CD8-positive, alpha-beta memory T cell (primary cell): ENCODE measurements at regions of chr16 and their contacts with region 1.

Region 1: GRCh38 chr16:50326949-50327402 is 41.8 kb downstream of the BRD7 start:
- DNase-seq: peak; percentile 53 to 85 (median 78)
- H3K4me3 ChIP-seq: no peak overlapping the region
- H3K4me3 Mint-ChIP-seq: peak overlapping the region in 3 of 7 donors; percentile 25 to 53 (median 26)
- H3K27ac ChIP-seq: no peak overlapping the region
- H3K27ac Mint-ChIP-seq: peak overlapping the region; percentile 62 to 96 (median 90)
- H3K4me1 ChIP-seq: peaks cover 25% of the 10 kb centered on the region
- H3K4me1 Mint-ChIP-seq: peaks cover 29 to 71% (median 38%) of the 10 kb centered on the region in 3 donors
- H3K27me3 ChIP-seq: no peaks in the 10 kb centered on the region
- H3K27me3 Mint-ChIP-seq: no peaks in the 10 kb centered on the region

Region 2: DNA sequence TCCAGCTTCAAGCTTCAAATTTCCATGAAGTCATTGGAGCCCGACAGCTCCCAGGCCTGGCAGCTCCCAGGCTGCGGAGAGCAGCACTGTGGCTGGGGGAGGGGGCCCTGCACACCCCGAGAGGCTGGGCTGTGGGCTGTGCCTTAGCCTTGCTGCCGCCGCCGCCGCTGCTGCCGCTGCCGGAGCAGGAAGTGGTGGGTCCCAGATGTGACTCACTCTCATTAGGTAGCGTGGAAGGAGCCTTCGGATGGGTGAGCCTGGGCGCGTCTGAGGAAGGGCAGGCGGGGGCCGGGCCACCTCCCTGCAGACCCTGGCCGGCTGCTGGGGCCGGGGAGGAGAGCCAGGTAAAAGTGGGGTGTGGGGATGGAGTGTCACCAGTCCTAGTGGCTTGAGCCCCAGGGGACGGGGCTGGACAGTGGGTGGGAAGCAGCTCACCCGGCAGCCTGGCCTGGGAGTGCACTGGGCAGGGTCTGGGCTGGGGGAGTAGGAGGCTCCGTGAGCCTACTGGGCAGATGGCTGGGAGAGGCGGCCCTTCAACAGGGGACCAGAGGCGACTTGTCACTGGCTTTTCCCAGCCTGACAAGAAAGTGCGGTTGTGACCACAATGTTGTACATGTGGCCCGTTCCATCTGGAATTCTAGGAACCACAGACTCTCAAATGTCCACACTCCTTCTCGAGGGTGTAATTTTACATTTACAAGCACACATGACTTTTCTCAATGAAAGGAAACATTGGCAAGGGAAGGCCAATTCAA is 60.5 kb before region 1 on chr16 and contains the start of gene ADCY7:
- CTCF ChIA-PET with region 1: interaction called, 40 read pairs
- POLR2A ChIA-PET with region 1: interaction called, 4 read pairs
- DNase-seq: peak; percentile 75 to 90 (median 80)
- H3K4me3 ChIP-seq: peak within 1 kb of the TSS; percentile 98
- H3K4me3 Mint-ChIP-seq: peak within 1 kb of the TSS; percentile 94 to 99 (median 97)
- H3K27ac ChIP-seq: peak within 1 kb of the TSS; percentile 89
- H3K27ac Mint-ChIP-seq: peak within 1 kb of the TSS; percentile 96 to 99 (median 98)
- H3K4me1 ChIP-seq: peaks cover 49% of the 10 kb centered on the region
- H3K4me1 Mint-ChIP-seq: peaks cover 60 to 81% (median 75%) of the 10 kb centered on the region in 3 donors
- H3K27me3 ChIP-seq: no peaks in the 10 kb centered on the region
- H3K27me3 Mint-ChIP-seq: peaks cover 0 to 1% of the 10 kb centered on the region in 2 donors
- total RNA-seq, gene ADCY7: 76.6 to 83.4 TPM

Region 3: DNA sequence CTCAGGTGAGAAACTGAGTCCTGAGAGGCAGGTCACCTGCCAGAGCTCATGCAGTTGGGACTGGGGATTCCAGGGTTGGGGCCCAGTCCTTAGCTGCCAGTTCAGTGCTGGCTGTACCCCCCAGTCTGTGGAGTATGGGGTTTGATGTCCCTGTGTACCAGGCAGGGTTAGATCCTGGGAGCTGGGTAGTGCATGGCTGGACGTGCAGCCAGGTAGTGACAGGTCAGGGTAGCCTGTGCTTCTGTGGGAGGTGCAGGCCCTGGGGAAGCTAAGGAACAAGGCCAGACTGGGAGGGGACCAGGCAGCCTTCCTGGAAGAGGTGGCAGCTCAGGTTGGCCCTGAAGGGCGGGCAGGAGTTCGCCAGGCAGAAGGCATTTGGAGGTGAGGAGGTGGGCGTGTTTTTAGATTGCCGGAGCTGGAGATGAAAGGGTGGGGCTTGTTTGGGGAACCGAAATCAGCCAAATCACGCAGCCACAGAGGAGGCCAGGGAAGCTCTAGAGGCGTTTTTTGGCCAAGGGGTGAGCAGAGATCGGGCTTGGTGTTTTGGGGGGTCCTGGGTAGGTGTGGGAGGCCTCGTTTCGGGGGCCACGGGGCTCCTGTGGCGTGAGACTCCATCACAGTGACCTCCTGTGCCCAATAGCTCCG is 53.2 kb before region 1 on chr16:
- CTCF ChIA-PET with region 1: interaction called, 40 read pairs
- POLR2A ChIA-PET with region 1: interaction called, 4 read pairs
- DNase-seq: peak in 2 of 5 donors; percentile 40 to 57
- H3K4me3 ChIP-seq: peak overlapping the region; percentile 67
- H3K4me3 Mint-ChIP-seq: peak overlapping the region; percentile 85 to 97 (median 90)
- H3K27ac ChIP-seq: peak overlapping the region; percentile 66
- H3K27ac Mint-ChIP-seq: peak overlapping the region; percentile 94 to 99 (median 98)
- H3K4me1 ChIP-seq: peaks cover 98% of the 10 kb centered on the region
- H3K4me1 Mint-ChIP-seq: peaks cover 93 to 100% (median 93%) of the 10 kb centered on the region in 3 donors
- H3K27me3 ChIP-seq: no peaks in the 10 kb centered on the region
- H3K27me3 Mint-ChIP-seq: no peaks in the 10 kb centered on the region

Region 4: GRCh38 chr16:50313596-50314478 is 13.1 kb before region 1 on chr16:
- CTCF ChIA-PET with region 1: interaction called, 18 read pairs
- POLR2A ChIA-PET with region 1: no interaction called
- DNase-seq: peak in 2 of 5 donors; percentile 29 to 38
- H3K4me3 ChIP-seq: no peak overlapping the region
- H3K4me3 Mint-ChIP-seq: peak overlapping the region in 1 of 7 donors; percentile 39
- H3K27ac ChIP-seq: no peak overlapping the region
- H3K27ac Mint-ChIP-seq: peak overlapping the region; percentile 35 to 94 (median 74)
- H3K4me1 ChIP-seq: peaks cover 14% of the 10 kb centered on the region
- H3K4me1 Mint-ChIP-seq: peaks cover 16 to 22% (median 18%) of the 10 kb centered on the region in 3 donors
- H3K27me3 ChIP-seq: no peaks in the 10 kb centered on the region
- H3K27me3 Mint-ChIP-seq: no peaks in the 10 kb centered on the region

Region 5: DNA sequence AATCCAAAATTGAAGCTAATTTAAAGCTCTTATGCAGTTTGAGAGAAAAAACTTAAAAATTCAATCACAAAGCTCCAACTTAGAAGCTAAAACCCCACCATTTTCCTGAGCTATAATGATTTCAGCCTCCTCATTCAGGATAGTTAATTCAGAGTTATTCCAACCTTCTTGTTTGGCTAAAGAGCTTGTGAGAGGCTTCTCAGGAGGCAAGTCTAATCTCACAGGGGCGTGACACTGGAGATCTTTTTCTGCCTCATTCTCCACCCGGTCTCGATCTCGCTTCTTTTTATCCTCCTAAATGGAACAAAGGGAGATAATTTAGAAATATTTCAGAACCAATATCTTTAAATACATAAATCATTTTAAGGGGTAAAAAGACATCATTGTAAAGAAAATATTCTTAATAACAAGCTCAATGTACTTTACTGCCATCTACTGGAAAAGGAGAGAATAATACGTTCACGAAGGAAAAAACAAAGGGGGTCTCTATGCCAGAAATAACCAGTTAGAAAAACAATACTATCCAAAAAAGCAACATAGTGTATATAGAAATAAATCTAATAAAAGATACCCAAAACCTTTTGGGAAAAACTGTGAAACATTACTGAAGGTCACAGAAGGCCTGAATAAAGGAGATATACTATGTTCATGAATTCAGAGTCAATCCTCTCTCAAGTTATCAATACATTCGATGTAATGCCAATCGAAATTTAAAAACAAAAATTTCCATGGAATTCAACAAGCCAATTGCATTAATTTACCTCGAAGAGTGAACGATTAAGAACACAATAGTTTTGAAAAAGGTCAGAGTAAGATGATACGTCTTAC is 27.9 kb after region 1 on chr16:
- CTCF ChIA-PET with region 1: interaction called, 15 read pairs
- POLR2A ChIA-PET with region 1: interaction called, 3 read pairs
- DNase-seq: peak in 2 of 5 donors; percentile 35 to 51
- H3K4me3 ChIP-seq: no peak overlapping the region
- H3K4me3 Mint-ChIP-seq: no peak overlapping the region
- H3K27ac ChIP-seq: no peak overlapping the region
- H3K27ac Mint-ChIP-seq: peak overlapping the region in 6 of 8 donors; percentile 0 to 91 (median 39)
- H3K4me1 ChIP-seq: peaks cover 15% of the 10 kb centered on the region
- H3K4me1 Mint-ChIP-seq: peaks cover 12 to 48% (median 33%) of the 10 kb centered on the region in 3 donors
- H3K27me3 ChIP-seq: no peaks in the 10 kb centered on the region
- H3K27me3 Mint-ChIP-seq: no peaks in the 10 kb centered on the region